Endothelial cell of umbilical vein (primary cell): ENCODE measurements at regions of chr9 and their contacts with region 1.

Region 1: GRCh38 chr9:97921959-97922724 is at the start of gene TRMO:
- DNase-seq: peak; percentile 98
- H3K4me3 ChIP-seq: peak within 1 kb of the TSS; percentile 15 to 71 (median 56)
- H3K27ac ChIP-seq: peak within 1 kb of the TSS; percentile 89
- H3K4me1 ChIP-seq: peaks cover 11% of the 10 kb centered on the region
- H3K27me3 ChIP-seq: peaks cover 8 to 22% of the 10 kb centered on the region in 2 experiments
- CTCF ChIP-seq: peak; percentile 61 to 76
- POLR2A ChIP-seq: peak; percentile 98
- total RNA-seq, gene TRMO: 10.1 and 10.9 TPM in 2 replicates

Region 2: GRCh38 chr9:97710356-97711222 is 211.6 kb before region 1 on chr9:
- CTCF ChIA-PET with region 1: interaction called, 3 read pairs
- POLR2A ChIA-PET with region 1: no interaction called
- dilution Hi-C with region 1: no loop called
- intact Hi-C with region 1: loop called (anchors 1 kb)
- DNase-seq: peak; percentile 69
- H3K4me3 ChIP-seq: no peak overlapping the region
- H3K27ac ChIP-seq: no peak overlapping the region
- H3K4me1 ChIP-seq: no peaks in the 10 kb centered on the region
- H3K27me3 ChIP-seq: peaks cover 14 to 17% of the 10 kb centered on the region in 2 experiments
- CTCF ChIP-seq: peak; percentile 73 to 76
- POLR2A ChIP-seq: no peak

Region 3: DNA sequence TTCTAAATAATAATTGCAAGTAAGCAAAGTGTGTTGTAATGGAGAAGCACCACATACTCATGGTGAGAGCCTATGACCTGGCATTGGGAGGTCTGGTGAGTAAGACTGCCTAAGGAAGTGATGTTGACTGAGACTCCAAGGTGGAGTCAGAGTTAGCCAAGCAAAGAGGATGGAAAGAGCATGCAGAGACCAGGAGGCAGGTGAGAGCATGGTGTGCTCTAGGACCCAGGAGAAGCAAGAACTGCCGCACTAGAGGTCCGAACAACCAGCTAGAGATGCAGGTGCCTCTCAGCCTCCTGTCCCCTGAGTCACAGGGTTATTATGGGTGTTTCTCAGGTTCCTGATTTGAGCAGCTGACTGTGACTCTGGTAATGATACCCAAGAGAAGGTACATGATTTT is 88.3 kb after region 1 on chr9:
- CTCF ChIA-PET with region 1: no interaction called
- POLR2A ChIA-PET with region 1: interaction called, 3 read pairs
- dilution Hi-C with region 1: no loop called
- intact Hi-C with region 1: loop called (anchors 1 kb)
- DNase-seq: peak; percentile 82
- H3K4me3 ChIP-seq: no peak overlapping the region
- H3K27ac ChIP-seq: peak overlapping the region; percentile 71
- H3K4me1 ChIP-seq: peaks cover 42% of the 10 kb centered on the region
- H3K27me3 ChIP-seq: no peaks in the 10 kb centered on the region
- CTCF ChIP-seq: no peak
- POLR2A ChIP-seq: peak; percentile 16

Region 4: GRCh38 chr9:98074115-98074990 is 152.2 kb after region 1 on chr9:
- CTCF ChIA-PET with region 1: interaction called, 5 read pairs
- POLR2A ChIA-PET with region 1: no interaction called
- dilution Hi-C with region 1: no loop called
- intact Hi-C with region 1: loop called (anchors 1 kb)
- DNase-seq: peak; percentile 64
- H3K4me3 ChIP-seq: no peak overlapping the region
- H3K27ac ChIP-seq: no peak overlapping the region
- H3K4me1 ChIP-seq: no peaks in the 10 kb centered on the region
- H3K27me3 ChIP-seq: no peaks in the 10 kb centered on the region
- CTCF ChIP-seq: peak; percentile 87 to 93
- POLR2A ChIP-seq: no peak

Region 5: GRCh38 chr9:98207606-98208005 is 285.5 kb after region 1 on chr9:
- CTCF ChIA-PET with region 1: no interaction called
- POLR2A ChIA-PET with region 1: no interaction called
- dilution Hi-C with region 1: no loop called
- intact Hi-C with region 1: loop called (anchors 1 kb)
- DNase-seq: no peak
- H3K4me3 ChIP-seq: no peak overlapping the region
- H3K27ac ChIP-seq: no peak overlapping the region
- H3K4me1 ChIP-seq: no peaks in the 10 kb centered on the region
- H3K27me3 ChIP-seq: no peaks in the 10 kb centered on the region
- CTCF ChIP-seq: no peak
- POLR2A ChIP-seq: no peak

Region 6: GRCh38 chr9:98333703-98334582 is 411.8 kb after region 1 on chr9:
- CTCF ChIA-PET with region 1: no interaction called
- POLR2A ChIA-PET with region 1: no interaction called
- dilution Hi-C with region 1: no loop called
- intact Hi-C with region 1: loop called (anchors 2 kb)
- DNase-seq: peak; percentile 94
- H3K4me3 ChIP-seq: no peak overlapping the region
- H3K27ac ChIP-seq: peak overlapping the region; percentile 98
- H3K4me1 ChIP-seq: peaks cover 41% of the 10 kb centered on the region
- H3K27me3 ChIP-seq: no peaks in the 10 kb centered on the region
- CTCF ChIP-seq: no peak
- POLR2A ChIP-seq: peak; percentile 80

Region 7: DNA sequence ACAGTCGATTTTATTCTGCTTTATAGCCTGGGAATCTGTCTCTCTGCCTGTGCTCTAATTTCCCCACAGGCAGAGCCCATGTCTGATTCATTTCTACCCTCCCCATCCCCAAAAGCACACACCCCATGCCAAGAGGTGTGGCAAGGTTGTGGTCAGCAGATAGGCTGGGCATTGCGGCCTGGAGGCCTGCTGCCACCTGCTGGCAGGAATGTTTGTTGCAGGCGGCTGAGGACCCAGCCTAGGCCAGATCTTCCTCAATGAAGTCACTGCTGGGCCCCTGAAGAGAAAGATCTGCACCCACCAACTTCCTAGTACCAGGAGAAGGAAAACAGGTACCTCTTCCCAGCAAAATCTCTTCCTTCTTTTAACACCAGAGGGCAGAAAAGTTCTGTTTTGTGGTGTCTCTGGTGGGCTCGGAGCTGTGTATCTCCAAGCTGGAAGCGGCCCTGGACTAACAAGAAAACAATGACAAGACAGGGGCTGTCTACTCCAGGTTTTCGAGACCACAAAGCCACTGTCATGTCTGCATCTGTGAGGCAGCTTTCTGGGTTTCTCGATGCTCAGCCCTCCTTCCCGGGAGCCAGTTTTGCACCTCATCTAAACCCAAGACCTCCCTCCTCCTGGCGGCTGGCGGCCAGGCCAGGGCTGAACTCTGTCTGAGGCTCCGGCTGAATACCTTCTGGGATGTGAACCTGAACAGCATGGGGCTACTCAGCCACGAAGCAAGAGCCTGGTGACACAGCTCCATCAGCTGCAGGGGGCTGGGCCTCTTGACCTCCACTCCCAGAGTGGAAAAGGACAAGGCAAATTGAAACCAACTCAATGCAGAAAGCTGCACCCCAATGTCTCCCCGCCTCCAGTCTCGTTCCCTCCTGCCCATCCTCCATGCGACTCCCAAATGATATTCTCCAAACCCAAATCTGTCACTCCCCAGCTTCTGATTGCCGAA is 869.3 kb after region 1 on chr9:
- CTCF ChIA-PET with region 1: no interaction called
- POLR2A ChIA-PET with region 1: no interaction called
- dilution Hi-C with region 1: no loop called
- intact Hi-C with region 1: loop called (anchors 2 kb)
- DNase-seq: peak; percentile 80
- H3K4me3 ChIP-seq: no peak overlapping the region
- H3K27ac ChIP-seq: no peak overlapping the region
- H3K4me1 ChIP-seq: peaks cover 16% of the 10 kb centered on the region
- H3K27me3 ChIP-seq: no peaks in the 10 kb centered on the region
- CTCF ChIP-seq: peak; percentile 96 to 98
- POLR2A ChIP-seq: no peak